PC-9 (cell line): ENCODE measurements at regions of chr12 and their contacts with region 1.

Region 1: GRCh38 chr12:113582521-113583218 is 111.0 kb upstream of the LHX5 start:
- DNase-seq: peak; percentile 37 to 53
- H3K4me3 ChIP-seq: no peak overlapping the region
- H3K27ac ChIP-seq: no peak overlapping the region
- H3K4me1 ChIP-seq: peaks cover 29% of the 10 kb centered on the region
- H3K27me3 ChIP-seq: no peaks in the 10 kb centered on the region
- CTCF ChIP-seq: no peak

Region 2: DNA sequence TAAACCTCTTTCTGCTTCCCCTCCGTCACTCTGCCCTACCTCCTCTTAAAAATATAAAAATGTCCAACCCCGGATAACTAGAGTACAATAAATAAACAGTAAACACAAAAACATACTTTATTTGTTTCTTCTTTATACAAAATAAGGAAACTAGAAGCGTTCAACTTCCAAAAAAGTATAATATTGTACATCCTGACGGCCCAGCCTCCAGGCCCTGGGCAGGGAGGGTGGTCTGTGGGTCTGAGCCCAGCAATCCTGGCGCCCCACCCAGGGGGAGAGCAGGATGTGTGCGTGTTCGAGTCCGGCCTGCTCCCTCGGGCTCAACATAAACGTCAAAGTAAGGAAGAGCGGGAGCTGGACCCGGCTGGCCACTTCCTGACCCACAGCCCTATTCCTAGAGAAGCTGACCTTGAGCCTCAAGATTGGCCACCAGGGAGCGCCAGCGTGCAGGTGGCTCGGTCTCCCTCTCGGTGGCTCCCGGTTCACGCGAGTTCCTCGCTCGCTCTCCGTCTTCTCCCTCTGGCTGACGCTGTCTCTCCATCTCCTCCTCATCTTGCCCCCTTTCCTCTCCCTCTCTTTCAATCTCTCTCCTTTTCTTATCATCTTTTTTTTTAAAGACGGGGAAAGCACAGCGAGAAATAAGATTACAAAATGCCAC is 120.4 kb before region 1 on chr12:
- CTCF ChIA-PET with region 1: no interaction called
- POLR2A ChIA-PET with region 1: no interaction called
- intact Hi-C with region 1: loop called (anchors 10 kb)
- DNase-seq: peak in 1 of 2 experiments; percentile 66
- H3K4me3 ChIP-seq: no peak overlapping the region
- H3K27ac ChIP-seq: no peak overlapping the region
- H3K4me1 ChIP-seq: no peaks in the 10 kb centered on the region
- H3K27me3 ChIP-seq: peaks cover 23% of the 10 kb centered on the region
- CTCF ChIP-seq: peak; percentile 80

Region 3: GRCh38 chr12:113727651-113728061 is 145.0 kb after region 1 on chr12:
- CTCF ChIA-PET with region 1: no interaction called
- POLR2A ChIA-PET with region 1: no interaction called
- intact Hi-C with region 1: loop called (anchors 1 kb)
- DNase-seq: peak; percentile 67 to 88
- H3K4me3 ChIP-seq: no peak overlapping the region
- H3K27ac ChIP-seq: no peak overlapping the region
- H3K4me1 ChIP-seq: peaks cover 18% of the 10 kb centered on the region
- H3K27me3 ChIP-seq: no peaks in the 10 kb centered on the region
- CTCF ChIP-seq: no peak; the same call in 1 of the 2 replicates